Motor neuron (in vitro differentiated cells): ENCODE measurements at regions of chr19 and their contacts with region 1.

Region 1: DNA sequence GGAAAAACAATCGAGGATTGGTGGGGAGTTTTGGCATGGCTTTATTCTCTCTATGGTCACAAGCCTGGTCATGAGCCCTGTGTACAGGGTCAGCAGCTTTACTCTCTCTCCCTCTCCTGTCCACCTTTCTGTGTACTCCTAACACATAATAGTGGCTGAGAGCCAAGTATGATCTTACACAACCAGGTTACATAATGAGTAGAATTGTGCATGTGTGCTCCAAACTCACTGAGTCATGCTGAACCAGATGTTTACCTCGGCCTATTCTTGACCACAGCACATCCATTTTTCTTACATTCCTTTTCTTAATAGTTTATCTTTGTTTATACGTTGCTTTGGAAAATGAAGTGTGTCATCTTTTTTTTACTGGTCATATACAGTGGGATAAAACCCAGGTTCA is 53.1 kb downstream of the ZNF254 start:
- ATAC-seq: peak in 3 of 8 experiments; percentile 18 to 69 (median 67)
- H3K4me3 ChIP-seq: no peak overlapping the region
- H3K27ac ChIP-seq: no peak overlapping the region
- H3K4me1 ChIP-seq: no peaks in the 10 kb centered on the region

Region 2: GRCh38 chr19:23365222-23365621 is 774.9 kb before region 1 on chr19:
- in situ Hi-C with region 1: loop called in 1 of 9 experiments (anchors 25 kb)
- ATAC-seq: no peak
- H3K4me3 ChIP-seq: no peak overlapping the region
- H3K27ac ChIP-seq: no peak overlapping the region
- H3K4me1 ChIP-seq: no peaks in the 10 kb centered on the region

Region 3: DNA sequence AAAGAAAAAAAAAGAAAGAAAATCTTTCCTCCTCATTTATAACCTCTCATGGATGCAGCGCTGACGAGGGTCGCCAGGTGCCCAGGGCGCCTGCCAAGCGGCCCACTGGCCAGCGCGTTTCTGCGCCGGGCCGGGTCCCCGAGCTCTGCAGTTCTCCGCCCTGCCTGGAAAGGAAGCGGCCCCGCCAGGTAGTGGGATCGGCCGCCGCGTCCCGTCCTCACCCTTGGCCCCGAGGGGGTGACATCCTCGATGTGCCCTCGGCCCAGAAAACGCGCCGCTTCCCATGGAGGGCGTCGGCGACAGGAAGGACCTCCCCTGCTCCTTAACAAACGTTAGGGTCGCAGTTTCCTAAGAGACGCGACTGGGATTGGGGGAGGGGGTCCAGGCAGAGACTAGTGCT is 168.5 kb before region 1 on chr19:
- in situ Hi-C with region 1: no loop called
- ATAC-seq: no peak
- H3K4me3 ChIP-seq: no peak overlapping the region
- H3K27ac ChIP-seq: no peak overlapping the region
- H3K4me1 ChIP-seq: no peaks in the 10 kb centered on the region

Region 4: DNA sequence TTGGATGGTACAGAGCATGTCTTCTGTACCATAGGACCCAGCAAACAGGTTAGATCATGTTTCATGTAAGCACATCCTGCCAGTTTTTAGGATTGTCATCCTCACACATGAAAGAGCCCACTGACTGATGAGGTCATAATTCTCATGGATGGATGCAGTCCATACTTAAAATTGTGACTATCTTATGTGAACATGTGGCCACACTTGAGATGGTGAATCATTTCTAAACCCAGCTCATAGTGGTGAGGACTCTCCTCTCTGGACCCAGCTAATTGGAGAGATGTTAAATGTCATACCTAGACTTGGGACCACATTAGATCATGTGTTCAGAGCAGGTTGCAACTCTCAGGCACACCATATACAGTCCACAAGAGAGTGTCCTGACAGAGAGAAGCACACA is 77.9 kb before region 1 on chr19:
- in situ Hi-C with region 1: no loop called
- ATAC-seq: peak in 3 of 8 experiments; percentile 22 to 70 (median 58)
- H3K4me3 ChIP-seq: no peak overlapping the region
- H3K27ac ChIP-seq: no peak overlapping the region
- H3K4me1 ChIP-seq: no peaks in the 10 kb centered on the region